Gastrocnemius medialis (tissue), 4 donors: ENCODE measurements at regions of chr14 and their contacts with region 1.

Region 1: GRCh38 chr14:75119056-75119455 is 7.8 kb downstream of the NEK9 start:
- DNase-seq: no peak
- ATAC-seq: no peak
- H3K4me3 ChIP-seq: no peak overlapping the region
- H3K27ac ChIP-seq: no peak overlapping the region
- H3K4me1 ChIP-seq: peaks cover 0 to 4% of the 10 kb centered on the region in 2 donors
- H3K27me3 ChIP-seq: no peaks in the 10 kb centered on the region
- CTCF ChIP-seq: no peak
- POLR2A ChIP-seq: no peak

Region 2: GRCh38 chr14:75041613-75042012 is 77.4 kb before region 1 on chr14:
- in situ Hi-C with region 1: no loop called
- intact Hi-C with region 1: loop called (anchors 2 kb)
- DNase-seq: no peak
- ATAC-seq: no peak
- H3K4me3 ChIP-seq: no peak overlapping the region
- H3K27ac ChIP-seq: no peak overlapping the region
- H3K4me1 ChIP-seq: peaks cover 11 to 25% of the 10 kb centered on the region in 2 donors
- H3K27me3 ChIP-seq: no peaks in the 10 kb centered on the region
- CTCF ChIP-seq: no peak
- POLR2A ChIP-seq: no peak